ENCODE measurements at regions of chr2 and their contacts with region 1.

Region 1: DNA sequence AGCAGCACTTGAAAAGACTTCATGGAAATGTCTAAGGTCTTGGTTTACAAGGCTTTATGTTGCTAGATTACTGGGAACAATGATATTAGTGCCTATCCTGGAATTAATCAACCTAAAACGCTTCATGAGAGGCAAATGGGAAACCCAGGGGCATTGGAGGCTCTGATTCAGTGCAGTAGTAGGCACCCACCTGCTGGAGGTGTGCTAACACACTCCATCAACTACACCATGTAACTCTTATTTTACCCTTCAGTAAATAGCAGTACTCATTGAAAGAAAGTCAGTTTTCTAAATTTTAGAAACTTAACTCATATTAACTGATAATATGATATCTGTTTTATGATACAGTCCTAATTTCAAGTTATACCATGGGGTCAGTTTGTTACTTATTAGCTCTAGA is 17.4 kb upstream of the HNRNPA3 start:
- DNase-seq: no peak
- ATAC-seq: peak; percentile 86
- H3K4me3 ChIP-seq: no peak overlapping the region
- H3K27ac ChIP-seq: no peak overlapping the region
- H3K4me1 ChIP-seq: peaks cover 7% of the 10 kb centered on the region; the same call in 1 of the 2 replicates
- H3K27me3 ChIP-seq: no peaks in the 10 kb centered on the region
- CTCF ChIP-seq: peak; percentile 11 to 40 (median 23); a peak in 3 of 6 replicates
- EP300 ChIP-seq: no peak
- POLR2A ChIP-seq: no peak
- RAD21 ChIP-seq: peak; percentile 29; the same call in 1 of the 2 replicates

Region 2: DNA sequence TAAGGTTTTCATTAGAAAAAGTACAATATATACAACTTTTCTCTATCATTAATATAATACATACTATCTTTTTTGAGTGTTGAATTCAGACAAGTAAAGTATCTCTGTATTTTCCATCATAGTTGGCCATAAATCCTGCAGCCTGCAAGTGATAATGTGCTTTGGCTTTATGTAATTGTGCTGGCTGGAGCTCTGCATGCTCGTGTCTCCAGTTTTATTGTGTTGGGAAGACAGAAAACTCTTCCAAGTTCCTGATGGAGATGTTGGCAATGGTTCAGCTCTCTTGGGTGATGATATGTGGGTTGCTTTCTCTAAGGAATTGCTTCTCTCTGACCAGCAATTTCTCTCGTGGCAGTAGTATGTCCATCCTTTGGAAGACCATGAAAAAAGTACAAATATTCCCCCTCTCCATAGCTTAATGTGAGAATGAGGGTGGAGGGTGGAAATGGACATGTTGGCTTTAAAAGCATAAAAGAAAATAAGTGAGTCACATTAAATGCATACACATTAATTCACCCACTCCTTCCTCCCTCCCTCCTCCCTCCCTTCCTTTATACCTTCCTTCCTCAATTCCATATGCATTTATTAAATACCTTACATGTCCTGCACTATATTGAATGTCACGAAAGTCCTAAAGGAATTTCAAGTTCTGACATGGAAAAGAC is 581.7 kb before region 1 on chr2:
- CTCF ChIA-PET with region 1: no interaction called
- POLR2A ChIA-PET with region 1: no interaction called
- RAD21 ChIA-PET with region 1: no interaction called
- SMC1A ChIA-PET with region 1: no interaction called
- in situ Hi-C with region 1: no loop called
- intact Hi-C with region 1: no loop called
- DNase-seq: no peak
- ATAC-seq: no peak
- H3K4me3 ChIP-seq: no peak overlapping the region
- H3K27ac ChIP-seq: no peak overlapping the region
- H3K4me1 ChIP-seq: no peaks in the 10 kb centered on the region
- H3K27me3 ChIP-seq: no peaks in the 10 kb centered on the region; a peak in 1 of 4 replicates
- CTCF ChIP-seq: no peak
- EP300 ChIP-seq: no peak
- POLR2A ChIP-seq: no peak
- RAD21 ChIP-seq: no peak

Region 3: DNA sequence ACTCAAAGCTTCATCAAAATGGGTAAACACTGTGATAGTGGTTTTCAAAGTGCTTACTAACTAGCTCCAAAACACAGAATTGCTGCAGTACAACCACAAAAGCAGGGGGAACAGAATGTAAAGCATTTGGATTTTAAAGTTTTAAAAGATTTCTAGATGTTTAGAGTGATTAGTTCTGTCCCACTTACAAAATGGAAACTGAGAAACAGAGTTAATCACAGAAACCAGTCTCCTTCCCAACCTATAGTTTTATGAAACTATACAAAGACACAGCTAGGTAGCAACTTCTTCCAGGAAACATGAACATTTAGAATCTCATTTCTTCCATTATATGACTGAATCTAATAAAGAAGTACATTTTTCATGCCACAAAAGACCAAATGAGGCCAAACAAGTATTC is 56.4 kb before region 1 on chr2:
- CTCF ChIA-PET with region 1: no interaction called
- POLR2A ChIA-PET with region 1: no interaction called
- RAD21 ChIA-PET with region 1: no interaction called
- SMC1A ChIA-PET with region 1: no interaction called
- in situ Hi-C with region 1: no loop called
- intact Hi-C with region 1: no loop called
- DNase-seq: no peak
- ATAC-seq: no peak
- H3K4me3 ChIP-seq: no peak overlapping the region
- H3K27ac ChIP-seq: no peak overlapping the region
- H3K4me1 ChIP-seq: no peaks in the 10 kb centered on the region
- H3K27me3 ChIP-seq: no peaks in the 10 kb centered on the region
- CTCF ChIP-seq: no peak
- EP300 ChIP-seq: no peak
- POLR2A ChIP-seq: no peak
- RAD21 ChIP-seq: no peak

Region 4: DNA sequence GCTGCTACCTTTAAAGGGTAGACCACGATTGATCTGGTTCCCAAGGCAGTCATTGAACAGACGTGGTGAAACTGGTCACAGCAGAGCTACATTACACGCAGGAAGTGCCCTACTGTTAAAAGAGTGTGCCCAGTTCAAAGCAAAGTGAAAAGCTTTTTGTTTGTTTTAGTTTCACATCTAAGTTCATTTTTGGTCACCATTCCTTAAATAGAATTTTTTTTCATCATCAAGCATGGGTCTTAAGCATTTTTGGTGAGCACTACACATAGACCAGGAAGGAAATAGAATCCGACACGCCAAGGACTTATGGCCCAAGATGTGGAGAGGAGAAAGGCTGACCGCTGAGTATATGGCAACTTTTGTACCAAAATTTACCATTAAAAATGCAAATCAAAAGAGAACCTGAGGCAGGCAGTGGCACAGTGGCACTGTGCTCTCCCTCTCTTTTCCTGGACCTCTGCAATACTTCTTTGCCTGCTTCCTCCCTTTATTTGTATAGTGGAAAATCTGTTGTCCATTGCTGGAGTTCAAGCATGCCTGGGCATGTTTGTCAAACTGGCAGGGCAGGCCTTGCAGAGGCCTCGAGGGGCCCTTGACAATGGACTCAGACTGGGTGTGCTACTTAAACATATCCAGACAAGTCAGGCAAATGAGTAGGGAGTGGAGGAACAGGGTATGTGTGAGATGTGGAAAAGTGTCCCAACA is 25.2 kb before region 1 on chr2:
- CTCF ChIA-PET with region 1: interaction called, 128 read pairs
- POLR2A ChIA-PET with region 1: interaction called, 9 read pairs
- RAD21 ChIA-PET with region 1: interaction called, 65 read pairs
- SMC1A ChIA-PET with region 1: interaction called, 82 read pairs
- in situ Hi-C with region 1: no loop called
- intact Hi-C with region 1: no loop called
- DNase-seq: peak; percentile 82
- ATAC-seq: peak; percentile 81
- H3K4me3 ChIP-seq: peak overlapping the region; percentile 9; the same call in 1 of the 2 replicates
- H3K27ac ChIP-seq: peak overlapping the region; percentile 84
- H3K4me1 ChIP-seq: peaks cover 33% of the 10 kb centered on the region
- H3K27me3 ChIP-seq: no peaks in the 10 kb centered on the region
- CTCF ChIP-seq: no peak
- EP300 ChIP-seq: no peak; a peak in 2 of 4 replicates
- POLR2A ChIP-seq: no peak
- RAD21 ChIP-seq: no peak

Region 5: GRCh38 chr2:177212106-177212890 is 17.1 kb after region 1 on chr2 and contains the start of gene HNRNPA3:
- CTCF ChIA-PET with region 1: interaction called, 22 read pairs
- POLR2A ChIA-PET with region 1: interaction called, 6 read pairs
- RAD21 ChIA-PET with region 1: interaction called, 20 read pairs
- SMC1A ChIA-PET with region 1: interaction called, 16 read pairs
- in situ Hi-C with region 1: no loop called
- intact Hi-C with region 1: no loop called
- DNase-seq: peak; percentile 95
- ATAC-seq: peak; percentile 88
- H3K4me3 ChIP-seq: peak within 1 kb of the TSS; percentile 95
- H3K27ac ChIP-seq: peak within 1 kb of the TSS; percentile 100
- H3K4me1 ChIP-seq: peaks cover 8% of the 10 kb centered on the region
- H3K27me3 ChIP-seq: no peaks in the 10 kb centered on the region
- CTCF ChIP-seq: peak in 2 of 3 experiments; percentile 16 to 20; a peak in 3 of 6 replicates
- EP300 ChIP-seq: peak in 1 of 2 experiments; percentile 43; a peak in 1 of 4 replicates
- POLR2A ChIP-seq: peak; percentile 46
- RAD21 ChIP-seq: no peak
- polyA plus RNA-seq, gene HNRNPA3: 221 to 285 TPM

Region 6: DNA sequence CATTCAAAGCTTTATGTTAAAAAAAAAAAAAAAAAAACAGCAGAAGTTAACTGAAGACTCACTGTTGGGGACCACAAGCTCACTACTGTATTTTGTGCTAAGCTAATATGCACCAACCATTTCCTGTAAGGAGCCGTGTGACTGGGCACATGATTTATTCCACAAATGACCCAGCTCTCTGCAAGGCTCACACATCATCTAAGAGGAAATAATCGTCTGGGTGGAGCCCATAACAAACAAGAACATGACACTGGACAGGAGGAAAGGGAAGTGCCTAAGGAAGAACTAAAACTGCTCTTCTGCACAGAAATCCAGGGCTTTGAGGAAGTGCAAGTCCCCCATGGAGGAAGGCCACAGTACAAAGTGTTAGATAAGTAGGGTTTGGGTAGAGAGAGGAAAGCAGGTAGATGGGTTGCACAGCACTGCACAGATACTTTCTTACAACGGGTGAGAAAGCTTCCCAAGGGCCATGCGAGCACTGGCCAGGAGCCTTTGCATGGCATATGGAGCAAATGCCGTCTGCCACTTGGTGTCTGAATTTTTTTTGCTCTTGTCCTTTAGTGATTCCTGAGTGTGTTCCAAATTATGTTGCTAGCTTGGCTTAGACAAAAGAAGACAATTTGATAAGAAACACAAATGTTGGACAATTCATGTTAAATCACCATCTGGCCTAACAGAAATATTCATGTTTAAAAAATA is 44.9 kb after region 1 on chr2:
- CTCF ChIA-PET with region 1: interaction called, 4 read pairs
- POLR2A ChIA-PET with region 1: interaction called, 3 read pairs
- RAD21 ChIA-PET with region 1: interaction called, 3 read pairs
- SMC1A ChIA-PET with region 1: interaction called, 13 read pairs
- in situ Hi-C with region 1: no loop called
- intact Hi-C with region 1: no loop called
- DNase-seq: peak; percentile 47
- ATAC-seq: peak; percentile 86
- H3K4me3 ChIP-seq: no peak overlapping the region
- H3K27ac ChIP-seq: peak overlapping the region; percentile 0; the same call in 1 of the 2 replicates
- H3K4me1 ChIP-seq: peaks cover 22% of the 10 kb centered on the region
- H3K27me3 ChIP-seq: no peaks in the 10 kb centered on the region
- CTCF ChIP-seq: no peak
- EP300 ChIP-seq: no peak
- POLR2A ChIP-seq: no peak
- RAD21 ChIP-seq: no peak

Region 7: GRCh38 chr2:177296040-177296439 is 100.8 kb after region 1 on chr2:
- CTCF ChIA-PET with region 1: interaction called, 29 read pairs
- POLR2A ChIA-PET with region 1: interaction called, 3 read pairs
- RAD21 ChIA-PET with region 1: interaction called, 5 read pairs
- SMC1A ChIA-PET with region 1: interaction called, 5 read pairs
- in situ Hi-C with region 1: no loop called
- intact Hi-C with region 1: no loop called
- DNase-seq: no peak
- ATAC-seq: peak; percentile 86
- H3K4me3 ChIP-seq: no peak overlapping the region
- H3K27ac ChIP-seq: no peak overlapping the region
- H3K4me1 ChIP-seq: peaks cover 5% of the 10 kb centered on the region; the same call in 1 of the 2 replicates
- H3K27me3 ChIP-seq: no peaks in the 10 kb centered on the region
- CTCF ChIP-seq: peak in 2 of 3 experiments; percentile 36 to 48; a peak in 2 of 6 replicates
- EP300 ChIP-seq: no peak
- POLR2A ChIP-seq: no peak
- RAD21 ChIP-seq: peak; percentile 45